Right ventricle myocardium inferior (tissue), 1 donor: ENCODE measurements at regions of chr3 and their contacts with region 1.

Region 1: DNA sequence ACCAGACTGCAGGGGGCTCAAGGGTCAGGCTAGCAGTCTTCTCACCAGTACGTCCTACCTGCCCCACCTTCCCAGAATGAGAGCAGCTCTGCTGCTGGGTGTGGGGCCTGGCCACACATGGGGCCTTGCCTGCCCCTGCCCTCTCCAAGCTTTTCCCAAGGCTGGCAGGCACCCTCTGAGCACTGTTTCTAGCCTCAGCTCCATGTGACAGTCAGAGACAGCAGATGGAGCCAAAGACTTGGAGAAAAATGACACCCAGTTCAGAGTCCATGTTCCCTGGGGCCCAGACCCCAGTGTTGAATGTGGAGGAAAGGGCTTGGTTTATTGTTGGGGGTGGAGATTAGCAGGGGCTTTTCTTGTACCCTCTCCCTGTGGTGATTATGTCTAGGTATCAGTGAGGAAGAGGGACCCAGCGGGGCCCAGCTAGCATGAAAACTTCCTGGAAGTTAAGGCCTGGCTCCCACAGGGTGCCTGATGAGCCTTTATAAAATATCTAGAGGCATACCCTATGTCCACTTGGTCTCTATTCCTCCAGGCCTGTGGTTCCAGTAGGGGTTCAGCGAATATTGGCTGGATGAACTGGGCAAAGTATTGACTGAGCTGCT is 153.8 kb downstream of the EEFSEC start:
- DNase-seq: no peak
- ATAC-seq: no peak

Region 2: GRCh38 chr3:126731044-126731443 is 1576.1 kb before region 1 on chr3:
- intact Hi-C with region 1: no loop called
- DNase-seq: no peak
- ATAC-seq: no peak

Region 3: DNA sequence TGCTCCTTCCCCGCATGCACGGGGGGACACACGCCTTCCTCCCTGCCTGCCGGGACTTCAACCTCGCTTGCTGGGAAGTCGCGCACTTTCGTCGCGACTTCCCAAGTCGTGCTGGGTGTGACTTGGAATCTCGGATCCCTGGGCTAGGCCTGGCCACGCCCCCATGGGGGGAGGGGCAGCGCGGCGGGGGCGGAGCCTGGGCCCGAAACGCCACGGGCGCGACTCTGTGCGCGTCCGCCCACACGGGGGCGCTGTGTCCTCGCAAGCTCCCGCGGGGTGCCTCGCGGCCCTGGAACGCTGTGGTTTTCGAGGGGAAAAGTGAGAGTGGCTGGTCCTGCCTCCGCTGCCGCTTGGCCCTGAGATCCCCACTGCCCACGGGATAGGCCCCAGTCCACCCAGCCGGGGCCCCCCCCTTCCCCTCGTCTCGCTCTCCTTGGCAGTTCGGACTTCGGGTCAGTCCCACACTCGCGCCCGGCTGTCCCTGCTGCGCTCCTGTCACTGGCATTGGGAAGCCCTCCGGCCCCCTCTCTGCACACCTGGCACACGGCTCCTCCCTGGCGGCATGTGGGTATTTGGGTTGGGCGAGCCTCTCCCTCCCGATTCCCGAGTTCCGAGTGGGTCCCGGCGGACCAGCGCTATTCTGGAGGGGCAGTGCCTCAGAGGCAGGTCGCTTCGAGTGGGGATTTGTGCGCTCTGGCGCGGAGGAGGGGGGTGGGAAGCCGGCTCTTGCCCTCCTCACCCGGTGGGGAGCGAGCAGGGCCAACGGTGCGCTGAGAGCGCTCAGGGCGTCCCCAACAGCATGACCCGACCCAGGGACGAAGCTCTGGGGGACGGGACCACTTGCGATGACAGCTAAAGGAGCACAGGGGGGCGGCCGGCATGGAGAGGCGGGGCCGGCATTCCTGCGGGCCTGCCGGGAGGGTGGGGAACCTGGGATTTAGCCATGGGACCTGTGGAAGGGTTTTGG is 231.3 kb before region 1 on chr3:
- intact Hi-C with region 1: loop called (anchors 10 kb)
- DNase-seq: peak; percentile 95
- ATAC-seq: peak; percentile 92

Region 4: DNA sequence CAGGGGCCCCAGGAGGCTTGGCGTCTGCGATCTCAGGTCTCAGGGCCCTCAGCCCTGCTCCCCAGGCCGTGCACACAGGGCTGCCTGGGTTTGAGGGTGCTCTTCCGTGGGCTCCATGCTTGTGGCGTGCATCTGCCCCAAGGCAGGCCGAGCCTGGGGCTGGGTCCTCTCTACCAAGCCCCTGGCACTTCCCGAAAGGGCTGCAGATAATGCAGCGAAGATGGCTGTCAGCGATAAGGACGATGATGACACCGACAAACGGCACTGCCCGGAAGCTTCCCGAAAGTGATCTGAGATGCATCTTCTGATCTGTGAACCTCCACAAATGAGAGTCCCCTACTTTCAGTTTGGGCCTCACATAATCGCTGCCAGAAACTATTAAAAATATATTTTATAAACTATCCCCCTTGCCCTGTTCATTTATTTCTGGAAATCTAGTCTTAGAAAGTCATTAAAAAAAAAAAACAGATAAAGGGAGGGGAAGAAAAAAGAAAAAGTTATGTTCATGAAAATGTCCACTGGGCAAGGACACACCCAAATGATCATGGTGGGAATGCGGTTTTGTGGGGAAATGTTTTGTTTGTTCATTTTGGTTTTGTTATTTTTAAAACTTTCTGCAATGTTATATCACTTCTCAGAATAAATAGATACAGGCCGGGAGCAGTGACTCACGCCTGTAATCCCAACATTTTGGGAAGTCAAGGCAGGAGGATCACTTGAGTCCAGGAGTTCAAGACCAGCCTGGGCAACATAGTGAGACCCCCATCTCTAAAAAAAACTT is 291.9 kb after region 1 on chr3:
- intact Hi-C with region 1: no loop called
- DNase-seq: no peak
- ATAC-seq: no peak